Sciatic nerve (tissue), 2 donors: ENCODE measurements at regions of chr4 and their contacts with region 1.

Region 1: DNA sequence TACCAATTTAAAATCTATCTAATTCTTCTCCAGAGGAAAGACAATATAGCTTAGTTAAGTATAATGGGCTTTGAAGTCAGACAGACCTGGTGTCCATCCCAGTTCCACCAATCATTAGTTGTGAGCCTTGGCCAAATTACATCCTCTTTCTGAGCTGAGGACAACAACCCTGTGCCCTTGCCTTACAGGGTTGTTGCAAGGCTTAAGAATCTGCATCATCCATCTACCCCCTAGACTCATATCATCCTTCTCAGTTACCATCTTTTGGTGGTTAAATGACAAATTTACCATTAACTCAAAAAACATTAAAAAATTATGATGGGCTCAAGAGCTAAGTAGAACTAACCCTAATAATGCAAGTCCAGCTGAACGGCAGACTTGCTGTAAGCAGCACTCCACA is 51.6 kb downstream of the NAP1L5 start:
- DNase-seq: no peak
- ATAC-seq: no peak

Region 2: DNA sequence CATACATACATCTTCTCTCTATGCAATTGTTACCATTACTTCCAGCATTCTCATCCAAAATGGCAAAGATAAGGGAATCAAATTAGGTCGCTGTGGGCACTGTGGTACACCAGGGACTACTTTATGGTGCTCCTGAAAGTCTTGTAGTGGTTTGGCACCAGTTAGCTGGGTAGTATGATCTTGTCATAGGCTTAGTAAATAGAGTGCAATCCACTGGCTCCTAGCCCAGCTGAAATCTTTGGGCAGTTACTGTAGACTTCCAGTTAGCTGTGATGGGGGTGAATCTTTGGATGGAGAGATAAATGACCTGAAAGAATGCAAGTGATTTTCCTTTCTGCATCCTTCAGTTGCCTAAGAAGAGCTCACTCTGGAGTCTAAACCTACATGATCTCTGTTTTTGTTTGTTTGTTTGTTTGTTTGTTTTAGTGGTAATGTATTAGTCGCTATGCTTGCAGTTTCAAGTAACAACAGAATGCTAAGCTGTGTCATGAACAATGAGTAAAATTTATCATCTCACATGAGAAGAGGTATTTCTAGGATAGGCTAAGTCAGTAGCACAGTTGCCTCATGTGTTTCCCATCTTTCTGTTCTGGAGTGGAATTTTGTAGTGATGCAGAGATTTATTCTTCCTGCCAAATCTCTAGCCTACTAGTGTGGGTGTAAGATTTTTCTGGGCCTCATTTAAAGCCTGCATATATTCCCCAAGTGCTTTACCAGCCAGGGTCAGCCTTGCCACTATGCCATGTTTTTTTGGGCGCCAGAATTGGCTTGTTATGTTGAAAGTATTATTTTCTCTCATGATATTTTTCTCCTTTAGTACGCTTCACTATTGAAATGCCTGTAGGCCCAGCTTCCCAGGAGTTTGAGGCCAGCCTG is 29.5 kb before region 1 on chr4:
- intact Hi-C with region 1: loop called (anchors 1 kb)
- DNase-seq: no peak
- ATAC-seq: no peak